Activated T-helper 2 cell treated with anti-CD3 and anti-CD28 coated beads, Interferon-gamma antibody, Interleukin-2, Interleukin-4, amounts not matched to agents 10 μg/mL and 5 μg/mL and 100 μg/mL, durations not matched to agents 14 hours and 24 hours and 36 hours (primary cell): ENCODE measurements at regions of chr15 and their contacts with region 1.

Region 1: GRCh38 chr15:55846116-55846707 is 103.3 kb upstream of the PRTG start:
- DNase-seq: peak; percentile 28
- H3K4me3 Mint-ChIP-seq: no peak overlapping the region
- H3K27ac Mint-ChIP-seq: no peak overlapping the region
- H3K4me1 Mint-ChIP-seq: peaks cover 2% of the 10 kb centered on the region
- H3K27me3 Mint-ChIP-seq: no peaks in the 10 kb centered on the region

Region 2: GRCh38 chr15:55649054-55649423 is 197.2 kb before region 1 on chr15:
- intact Hi-C with region 1: loop called (anchors 1 kb)
- DNase-seq: no peak
- H3K4me3 Mint-ChIP-seq: no peak overlapping the region
- H3K27ac Mint-ChIP-seq: no peak overlapping the region
- H3K4me1 Mint-ChIP-seq: peaks cover 16% of the 10 kb centered on the region
- H3K27me3 Mint-ChIP-seq: peaks cover 4% of the 10 kb centered on the region

Region 3: DNA sequence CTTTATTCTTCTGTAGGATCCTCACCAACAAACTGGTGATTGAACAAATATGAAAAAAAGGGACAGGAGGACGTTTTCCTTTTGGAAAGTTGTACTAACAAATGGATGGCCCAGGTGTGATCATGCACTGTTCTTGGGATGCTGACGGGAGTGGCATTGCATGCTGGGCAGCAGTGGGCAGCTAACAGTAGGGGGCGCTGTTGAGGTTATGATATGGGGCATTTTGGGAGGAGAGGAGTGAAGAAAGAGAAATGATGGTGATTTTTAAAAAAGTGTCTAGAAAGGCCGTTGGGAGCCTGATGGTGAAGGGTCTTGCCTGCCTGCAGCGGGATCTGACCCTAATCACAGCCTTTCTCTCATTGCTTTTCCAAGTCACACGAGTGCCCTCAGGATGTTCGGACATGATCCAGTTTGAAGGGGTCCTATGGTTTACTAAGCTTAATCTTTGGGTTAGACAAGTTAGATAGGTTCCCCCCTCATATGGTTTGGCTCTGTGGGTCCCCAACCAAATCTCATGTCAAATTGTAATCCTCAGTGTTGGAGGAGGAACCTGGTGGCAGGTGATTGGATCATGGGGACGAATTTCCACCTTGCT is 57.0 kb before region 1 on chr15:
- intact Hi-C with region 1: loop called (anchors 1 kb)
- DNase-seq: peak; percentile 18
- H3K4me3 Mint-ChIP-seq: no peak overlapping the region
- H3K27ac Mint-ChIP-seq: no peak overlapping the region
- H3K4me1 Mint-ChIP-seq: no peaks in the 10 kb centered on the region
- H3K27me3 Mint-ChIP-seq: no peaks in the 10 kb centered on the region

Region 4: DNA sequence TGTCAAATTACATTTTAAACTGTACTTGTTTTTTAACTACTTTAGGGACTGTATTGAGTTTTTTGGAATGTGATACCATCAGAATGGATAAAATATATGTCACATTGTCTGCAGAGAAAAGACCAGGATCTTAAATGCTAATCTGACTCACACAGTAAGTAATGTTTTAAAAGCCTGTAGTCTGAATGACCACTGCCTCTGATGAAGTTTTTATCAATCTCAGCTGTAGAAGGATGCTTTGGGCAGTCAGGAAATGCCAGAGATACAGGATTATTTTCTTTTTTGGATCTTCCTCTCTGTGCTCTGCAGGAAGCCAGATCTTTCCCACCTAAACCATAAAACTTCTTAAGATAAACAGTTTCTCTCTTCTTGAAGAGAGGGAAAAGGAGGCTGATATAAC is 30.2 kb before region 1 on chr15:
- intact Hi-C with region 1: no loop called
- DNase-seq: no peak
- H3K4me3 Mint-ChIP-seq: no peak overlapping the region
- H3K27ac Mint-ChIP-seq: no peak overlapping the region
- H3K4me1 Mint-ChIP-seq: peaks cover 8% of the 10 kb centered on the region
- H3K27me3 Mint-ChIP-seq: peaks cover 3% of the 10 kb centered on the region

Region 5: GRCh38 chr15:55834331-55834730 is 11.9 kb before region 1 on chr15:
- intact Hi-C with region 1: no loop called
- DNase-seq: no peak
- H3K4me3 Mint-ChIP-seq: no peak overlapping the region
- H3K27ac Mint-ChIP-seq: no peak overlapping the region
- H3K4me1 Mint-ChIP-seq: peaks cover 13% of the 10 kb centered on the region
- H3K27me3 Mint-ChIP-seq: no peaks in the 10 kb centered on the region

Region 6: DNA sequence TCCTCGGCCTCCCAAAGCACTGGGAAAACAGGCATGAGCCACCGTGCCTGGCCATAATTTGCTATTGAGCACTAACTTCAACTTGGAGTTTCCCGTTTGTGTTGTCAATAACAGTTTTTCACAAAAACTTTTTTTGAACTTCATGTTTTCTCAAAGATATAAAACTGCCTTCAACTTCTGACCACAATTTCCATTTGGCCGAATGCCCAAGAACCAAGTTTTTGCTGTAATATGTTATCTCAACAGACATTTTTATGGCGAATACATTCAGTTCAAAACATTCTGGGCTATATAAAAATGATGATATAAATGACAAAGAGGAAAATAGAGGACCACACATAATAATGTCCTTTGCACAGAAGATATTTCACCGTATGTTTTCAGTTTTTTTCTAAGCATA is 90.8 kb after region 1 on chr15:
- intact Hi-C with region 1: no loop called
- DNase-seq: no peak
- H3K4me3 Mint-ChIP-seq: no peak overlapping the region
- H3K27ac Mint-ChIP-seq: no peak overlapping the region
- H3K4me1 Mint-ChIP-seq: no peaks in the 10 kb centered on the region
- H3K27me3 Mint-ChIP-seq: no peaks in the 10 kb centered on the region

Region 7: GRCh38 chr15:56124391-56124790 is 278.2 kb after region 1 on chr15:
- intact Hi-C with region 1: no loop called
- DNase-seq: no peak
- H3K4me3 Mint-ChIP-seq: no peak overlapping the region
- H3K27ac Mint-ChIP-seq: no peak overlapping the region
- H3K4me1 Mint-ChIP-seq: no peaks in the 10 kb centered on the region
- H3K27me3 Mint-ChIP-seq: no peaks in the 10 kb centered on the region